Activated naive CD4-positive, alpha-beta T cell treated with anti-CD3 and anti-CD28 coated beads, Interleukin-2, amount 10 ng/mL, durations not matched to agents 7 days and 5 days (primary cell): ENCODE measurements at regions of chr17 and their contacts with region 1.

Region 1: GRCh38 chr17:688100-688989 is 26.3 kb downstream of the VPS53 start:
- DNase-seq: peak; percentile 36
- H3K4me3 Mint-ChIP-seq: no peak overlapping the region
- H3K27ac Mint-ChIP-seq: no peak overlapping the region
- H3K4me1 Mint-ChIP-seq: peaks cover 4% of the 10 kb centered on the region
- H3K27me3 Mint-ChIP-seq: no peaks in the 10 kb centered on the region

Region 2: DNA sequence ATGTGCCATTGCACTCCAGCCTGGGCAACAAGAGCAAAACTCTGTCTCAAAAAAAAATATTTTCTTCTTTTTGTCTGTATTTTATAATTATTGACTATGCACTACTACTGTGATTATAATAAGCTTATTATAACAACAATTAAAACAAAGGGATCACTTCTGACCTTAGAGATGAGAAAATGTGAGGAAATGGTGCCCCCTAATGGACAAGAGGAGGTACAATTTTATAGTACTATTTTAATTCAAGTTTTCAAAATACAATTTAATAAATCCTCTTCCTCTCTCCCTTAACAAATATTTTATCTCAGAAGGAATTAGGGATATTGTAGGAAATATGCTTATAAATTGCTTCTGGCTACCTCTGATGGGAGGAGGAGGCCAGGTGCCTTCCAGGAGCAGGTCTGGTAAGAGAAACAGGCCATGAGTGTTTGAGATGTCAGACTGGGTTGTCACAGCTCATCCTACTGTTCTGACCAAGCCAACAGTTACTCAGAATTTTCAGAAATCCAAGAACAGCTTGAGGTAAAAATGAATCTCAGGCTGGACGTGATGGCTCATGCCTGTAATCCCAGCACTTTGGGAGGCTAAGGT is 12.3 kb after region 1 on chr17:
- CTCF ChIA-PET with region 1: interaction called, 21 read pairs
- DNase-seq: no peak
- H3K4me3 Mint-ChIP-seq: no peak overlapping the region
- H3K27ac Mint-ChIP-seq: no peak overlapping the region
- H3K4me1 Mint-ChIP-seq: no peaks in the 10 kb centered on the region
- H3K27me3 Mint-ChIP-seq: no peaks in the 10 kb centered on the region